HCT116 (cell line): ENCODE measurements at regions of chr11 and their contacts with region 1.

Region 1: DNA sequence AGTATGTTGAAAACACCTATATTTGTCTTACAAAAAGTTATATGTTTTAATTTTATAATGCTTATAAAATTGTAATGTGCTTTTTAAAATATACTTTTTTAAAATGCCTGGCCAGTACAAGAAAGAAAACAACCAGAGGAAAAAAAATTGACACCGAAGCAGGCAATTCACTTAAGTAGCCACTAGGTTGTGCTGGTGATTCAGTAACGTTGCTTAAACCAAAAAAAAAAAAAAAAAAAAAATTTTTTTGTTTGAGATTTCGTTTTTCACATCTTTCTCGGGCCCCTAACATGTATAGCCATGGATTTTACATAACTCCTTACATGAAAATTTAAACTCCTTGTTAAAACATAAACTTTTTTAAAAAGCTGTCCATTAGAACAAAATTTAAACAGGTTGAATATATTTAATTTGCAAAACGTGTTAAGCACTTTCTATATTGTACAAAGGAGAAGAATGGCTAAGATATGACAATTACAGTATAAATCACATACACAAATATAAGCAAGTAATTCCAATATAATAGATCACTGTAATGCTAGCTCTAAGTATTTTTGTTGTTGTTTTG is 9.2 kb downstream of the OR8B4 start:
- DNase-seq: peak; percentile 46
- ATAC-seq: no peak
- H3K4me3 ChIP-seq: no peak overlapping the region
- H3K27ac ChIP-seq: no peak overlapping the region
- H3K4me1 ChIP-seq: no peaks in the 10 kb centered on the region
- H3K27me3 ChIP-seq: peaks cover 57% of the 10 kb centered on the region
- CTCF ChIP-seq: peak; percentile 60 to 64 (median 63)
- POLR2A ChIP-seq: no peak
- RAD21 ChIP-seq: peak; percentile 74

Region 2: DNA sequence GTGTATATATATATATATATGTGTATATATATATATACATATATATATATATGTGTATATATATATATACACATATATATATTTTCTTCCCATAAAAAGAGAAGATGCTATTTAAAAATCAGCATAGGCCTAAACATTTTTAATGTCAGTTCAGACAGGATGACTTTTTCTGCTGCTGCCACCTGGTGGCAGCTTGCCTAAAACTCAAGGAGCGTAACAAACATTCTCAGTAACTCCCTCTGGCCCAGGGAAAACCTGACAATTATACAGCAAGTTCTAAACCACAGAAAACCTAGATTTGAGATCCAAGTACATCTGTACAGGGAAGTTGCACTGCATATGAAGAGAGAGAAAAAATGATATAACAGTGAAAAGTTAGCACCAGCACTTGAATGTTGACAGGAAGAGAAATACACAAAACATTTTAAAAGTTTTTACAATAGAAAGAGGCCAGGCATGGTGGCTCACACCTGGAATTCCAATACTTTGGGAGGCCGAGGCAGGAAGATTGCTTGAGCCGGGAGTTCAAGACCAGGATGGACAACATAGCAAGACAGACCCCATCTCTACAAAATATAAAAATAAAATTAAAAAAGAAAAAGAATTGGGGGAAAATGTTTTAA is 170.9 kb after region 1 on chr11:
- CTCF ChIA-PET with region 1: interaction called, 14 read pairs
- POLR2A ChIA-PET with region 1: no interaction called
- RAD21 ChIA-PET with region 1: no interaction called
- intact Hi-C with region 1: loop called (anchors 1 kb)
- DNase-seq: peak; percentile 44
- ATAC-seq: peak; percentile 79
- H3K4me3 ChIP-seq: no peak overlapping the region
- H3K27ac ChIP-seq: no peak overlapping the region
- H3K4me1 ChIP-seq: no peaks in the 10 kb centered on the region
- H3K27me3 ChIP-seq: peaks cover 64% of the 10 kb centered on the region
- CTCF ChIP-seq: peak; percentile 63 to 71 (median 66)
- POLR2A ChIP-seq: no peak
- RAD21 ChIP-seq: peak; percentile 63